Dorsolateral prefrontal cortex (tissue), 120 donors: ENCODE measurements at regions of chr5 and their contacts with region 1.

Region 1: DNA sequence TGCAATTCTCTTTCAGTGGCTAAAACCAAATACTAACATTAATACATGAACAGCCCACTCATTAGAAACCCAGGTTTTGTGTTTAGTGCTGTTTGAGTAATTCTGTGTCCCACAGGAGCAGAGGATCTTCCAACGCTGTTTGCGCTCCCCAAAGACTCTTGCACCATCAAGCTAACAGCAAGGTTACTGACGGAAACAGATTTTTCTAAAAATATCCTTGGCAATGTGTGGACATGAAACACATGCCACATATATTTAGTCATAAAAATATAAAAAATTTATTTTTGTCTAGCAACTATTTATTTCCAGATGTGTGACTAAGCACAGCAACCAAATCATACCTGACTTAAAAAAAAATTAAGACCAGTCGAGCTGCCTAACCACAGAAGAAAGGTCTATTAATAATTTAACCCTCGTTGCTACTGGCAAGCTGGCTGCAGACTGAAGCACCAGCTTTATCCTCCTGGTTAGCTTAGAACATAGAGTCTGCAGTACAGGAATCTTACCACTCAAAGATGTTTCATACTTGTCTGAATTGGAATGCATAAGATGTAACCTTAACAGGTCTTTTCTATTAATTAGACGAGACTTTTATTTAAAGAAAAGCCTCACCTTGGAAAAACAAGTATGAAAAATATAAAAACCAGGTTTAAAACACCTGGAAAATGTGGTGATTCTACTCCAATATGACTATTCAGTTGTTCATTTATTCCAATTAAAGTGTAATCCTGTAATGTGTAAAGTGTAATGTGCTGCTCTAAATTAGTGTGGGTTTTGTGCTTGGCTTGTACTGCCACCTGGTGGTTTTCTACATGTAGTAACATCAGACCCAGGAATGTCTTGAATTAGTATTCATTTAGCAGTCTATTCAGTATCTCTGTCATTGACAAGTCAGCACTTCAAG is 272.5 kb downstream of the EPB41L4A start:
- DNase-seq: peak in 5 of 10 donors; percentile 34 to 82 (median 67)
- H3K4me3 ChIP-seq: no peak overlapping the region
- H3K27ac ChIP-seq: peak overlapping the region in 1 of 59 donors; percentile 68
- H3K27me3 ChIP-seq: no peaks in the 10 kb centered on the region
- CTCF ChIP-seq: peak; percentile 83 to 99 (median 92)

Region 2: GRCh38 chr5:111158105-111158744 is 988.4 kb before region 1 on chr5:
- intact Hi-C with region 1: loop called in 1 of 2 experiments (anchors 5 kb)
- DNase-seq: peak in 7 of 10 donors; percentile 49 to 90 (median 72)
- H3K4me3 ChIP-seq: peak overlapping the region in 4 of 59 donors; percentile 6 to 31 (median 10)
- H3K27ac ChIP-seq: no peak overlapping the region
- H3K27me3 ChIP-seq: no peaks in the 10 kb centered on the region
- CTCF ChIP-seq: peak; percentile 95 to 100 (median 99)

Region 3: GRCh38 chr5:111530298-111530740 is 616.3 kb before region 1 on chr5:
- intact Hi-C with region 1: loop called (anchors 2 to 5 kb)
- DNase-seq: peak in 5 of 10 donors; percentile 46 to 68 (median 48)
- H3K4me3 ChIP-seq: peak overlapping the region in 23 of 59 donors; percentile 0 to 39 (median 15)
- H3K27ac ChIP-seq: peak overlapping the region in 20 of 59 donors; percentile 2 to 61 (median 36)
- H3K27me3 ChIP-seq: no peaks in the 10 kb centered on the region
- CTCF ChIP-seq: no peak

Region 4: GRCh38 chr5:111550279-111551020 is 596.1 kb before region 1 on chr5:
- intact Hi-C with region 1: loop called (anchors 5 kb)
- DNase-seq: peak in 9 of 10 donors; percentile 48 to 83 (median 57)
- H3K4me3 ChIP-seq: no peak overlapping the region
- H3K27ac ChIP-seq: peak overlapping the region in 9 of 59 donors; percentile 4 to 53 (median 21)
- H3K27me3 ChIP-seq: no peaks in the 10 kb centered on the region
- CTCF ChIP-seq: peak; percentile 38 to 88 (median 75)

Region 5: DNA sequence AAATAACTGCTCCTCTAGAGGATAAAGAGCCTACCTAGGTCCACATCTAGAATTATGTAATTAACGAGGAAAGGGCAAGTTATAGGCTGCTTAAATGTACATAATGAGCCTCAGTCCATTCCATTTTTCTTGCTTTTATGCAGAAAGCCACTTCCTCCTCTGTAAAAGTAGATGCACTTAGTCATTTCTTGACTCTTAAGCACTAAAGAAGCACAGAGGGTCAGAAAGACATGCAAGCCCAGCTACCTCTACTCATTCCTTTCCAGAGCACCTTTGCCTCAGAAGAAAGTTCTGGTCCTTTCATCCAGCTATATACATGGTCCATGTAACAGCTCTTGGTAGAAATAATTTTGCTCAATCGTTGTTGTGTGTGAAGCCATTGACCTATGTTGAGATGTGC is 81.6 kb before region 1 on chr5:
- intact Hi-C with region 1: no loop called
- DNase-seq: no peak
- H3K4me3 ChIP-seq: no peak overlapping the region
- H3K27ac ChIP-seq: no peak overlapping the region
- H3K27me3 ChIP-seq: no peaks in the 10 kb centered on the region
- CTCF ChIP-seq: no peak

Region 6: GRCh38 chr5:112511920-112512319 is 365.3 kb after region 1 on chr5:
- intact Hi-C with region 1: no loop called
- DNase-seq: no peak
- H3K4me3 ChIP-seq: no peak overlapping the region
- H3K27ac ChIP-seq: no peak overlapping the region
- H3K27me3 ChIP-seq: no peaks in the 10 kb centered on the region
- CTCF ChIP-seq: no peak